T-cell (primary cell): ENCODE measurements at regions of chr1 and their contacts with region 1.

Region 1: GRCh38 chr1:156627313-156627880 is 8.2 kb downstream of the HAPLN2 start:
- DNase-seq: peak in 6 of 35 experiments; percentile 14 to 64 (median 27)
- ATAC-seq: peak in 1 of 4 experiments; percentile 40
- H3K4me3 ChIP-seq: no peak overlapping the region
- H3K4me3 Mint-ChIP-seq: no peak overlapping the region
- H3K27ac ChIP-seq: no peak overlapping the region
- H3K27ac Mint-ChIP-seq: no peak overlapping the region
- H3K4me1 ChIP-seq: peaks cover 0 to 24% of the 10 kb centered on the region in 2 experiments
- H3K4me1 Mint-ChIP-seq: peaks cover 13 to 17% (median 14%) of the 10 kb centered on the region in 3 donors
- H3K27me3 ChIP-seq: peaks cover 13 to 63% of the 10 kb centered on the region in 2 experiments
- H3K27me3 Mint-ChIP-seq: peaks cover 44 to 60% of the 10 kb centered on the region in 2 donors

Region 2: GRCh38 chr1:156538676-156539440 is 88.5 kb before region 1 on chr1:
- CTCF ChIA-PET with region 1: no interaction called
- POLR2A ChIA-PET with region 1: no interaction called
- DNase-seq: no peak
- ATAC-seq: no peak
- H3K4me3 ChIP-seq: no peak overlapping the region
- H3K4me3 Mint-ChIP-seq: no peak overlapping the region
- H3K27ac ChIP-seq: no peak overlapping the region
- H3K27ac Mint-ChIP-seq: no peak overlapping the region
- H3K4me1 ChIP-seq: no peaks in the 10 kb centered on the region
- H3K4me1 Mint-ChIP-seq: no peaks in the 10 kb centered on the region
- H3K27me3 ChIP-seq: peaks cover 0 to 5% of the 10 kb centered on the region in 2 experiments
- H3K27me3 Mint-ChIP-seq: no peaks in the 10 kb centered on the region

Region 3: GRCh38 chr1:156639601-156640101 is 12.3 kb after region 1 on chr1:
- CTCF ChIA-PET with region 1: interaction called, 4 to 10 read pairs
- POLR2A ChIA-PET with region 1: no interaction called
- DNase-seq: no peak
- ATAC-seq: no peak
- H3K4me3 ChIP-seq: no peak overlapping the region
- H3K4me3 Mint-ChIP-seq: no peak overlapping the region
- H3K27ac ChIP-seq: no peak overlapping the region
- H3K27ac Mint-ChIP-seq: no peak overlapping the region
- H3K4me1 ChIP-seq: peaks cover 9 to 34% of the 10 kb centered on the region in 2 experiments
- H3K4me1 Mint-ChIP-seq: peaks cover 20 to 31% (median 30%) of the 10 kb centered on the region in 3 donors
- H3K27me3 ChIP-seq: peaks cover 10 to 92% of the 10 kb centered on the region in 2 experiments
- H3K27me3 Mint-ChIP-seq: peaks cover 66 to 83% of the 10 kb centered on the region in 2 donors